Activated T-helper 1 cell treated with anti-CD3 and anti-CD28 coated beads, Interleukin-12 subunit alpha, Interleukin-12 subunit beta, Interleukin-2, Interleukin-4 antibody, amounts not matched to agents 30 ng/mL and 10 ng/mL and 1 ng/mL, durations not matched to agents 14 hours and 24 hours and 36 hours (primary cell): ENCODE measurements at regions of chr10 and their contacts with region 1.

Region 1: GRCh38 chr10:72088889-72089575 is 681 bp upstream of the SPOCK2 start:
- DNase-seq: peak; percentile 47
- H3K4me3 Mint-ChIP-seq: peak overlapping the region; percentile 99
- H3K27ac Mint-ChIP-seq: peak overlapping the region; percentile 99
- H3K4me1 Mint-ChIP-seq: peaks cover 62% of the 10 kb centered on the region
- H3K27me3 Mint-ChIP-seq: no peaks in the 10 kb centered on the region

Region 2: DNA sequence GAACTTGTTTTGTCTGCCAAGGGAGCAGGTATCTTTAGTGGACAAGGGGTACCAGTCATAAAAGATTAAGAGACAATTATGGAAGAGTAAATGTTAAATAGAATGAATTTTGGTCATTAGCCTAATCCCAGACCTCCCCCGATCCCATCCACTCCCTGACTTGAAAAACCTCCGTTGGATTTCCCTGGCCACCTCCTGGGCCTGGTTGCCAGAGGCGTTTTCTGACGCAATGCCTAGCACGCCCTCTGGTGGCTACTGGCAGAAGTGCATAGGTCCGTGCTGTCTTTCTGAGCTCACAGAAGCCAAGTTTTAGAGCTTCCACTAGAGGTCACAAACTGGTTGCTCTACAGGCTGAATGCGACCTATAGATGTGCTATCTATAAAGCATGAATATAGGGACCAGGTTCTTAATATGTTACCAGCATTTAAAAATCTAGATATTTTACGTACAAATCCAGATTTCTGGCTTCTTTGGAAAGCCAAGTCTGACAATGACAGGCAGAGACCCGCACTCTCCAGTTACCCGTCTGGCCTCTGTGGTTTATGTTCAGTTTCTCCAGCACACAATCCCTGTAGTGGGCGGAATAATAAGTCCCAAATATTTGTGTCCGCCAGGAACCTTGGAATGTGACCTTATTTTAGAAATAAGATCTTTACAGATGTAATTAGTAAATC is 40.4 kb before region 1 on chr10:
- intact Hi-C with region 1: loop called (anchors 2 kb)
- DNase-seq: peak; percentile 75
- H3K4me3 Mint-ChIP-seq: no peak overlapping the region
- H3K27ac Mint-ChIP-seq: peak overlapping the region; percentile 0
- H3K4me1 Mint-ChIP-seq: peaks cover 12% of the 10 kb centered on the region
- H3K27me3 Mint-ChIP-seq: peaks cover 3% of the 10 kb centered on the region

Region 3: GRCh38 chr10:72107325-72108003 is 18.4 kb after region 1 on chr10:
- intact Hi-C with region 1: loop called (anchors 1 kb)
- DNase-seq: no peak
- H3K4me3 Mint-ChIP-seq: peak overlapping the region; percentile 79
- H3K27ac Mint-ChIP-seq: peak overlapping the region; percentile 85
- H3K4me1 Mint-ChIP-seq: peaks cover 72% of the 10 kb centered on the region
- H3K27me3 Mint-ChIP-seq: peaks cover 2% of the 10 kb centered on the region

Region 4: GRCh38 chr10:72126184-72126871 is 37.3 kb after region 1 on chr10:
- intact Hi-C with region 1: loop called (anchors 5 kb)
- DNase-seq: no peak
- H3K4me3 Mint-ChIP-seq: no peak overlapping the region
- H3K27ac Mint-ChIP-seq: no peak overlapping the region
- H3K4me1 Mint-ChIP-seq: peaks cover 39% of the 10 kb centered on the region
- H3K27me3 Mint-ChIP-seq: no peaks in the 10 kb centered on the region

Region 5: GRCh38 chr10:72162978-72163377 is 73.9 kb after region 1 on chr10:
- intact Hi-C with region 1: loop called (anchors 2 kb)
- DNase-seq: no peak
- H3K4me3 Mint-ChIP-seq: peak overlapping the region; percentile 57
- H3K27ac Mint-ChIP-seq: peak overlapping the region; percentile 80
- H3K4me1 Mint-ChIP-seq: peaks cover 27% of the 10 kb centered on the region
- H3K27me3 Mint-ChIP-seq: no peaks in the 10 kb centered on the region

Region 6: GRCh38 chr10:73167783-73168464 is 1078.9 kb after region 1 on chr10 and contains the starts of genes ECD and FAM149B1:
- intact Hi-C with region 1: loop called (anchors 10 kb)
- DNase-seq: peak; percentile 91
- H3K4me3 Mint-ChIP-seq: peak within 1 kb of the TSS; percentile 99
- H3K27ac Mint-ChIP-seq: peak within 1 kb of the TSS; percentile 99
- H3K4me1 Mint-ChIP-seq: peaks cover 42% of the 10 kb centered on the region
- H3K27me3 Mint-ChIP-seq: no peaks in the 10 kb centered on the region
- total RNA-seq, gene ECD: 38.0 and 39.5 TPM in 2 replicates
- total RNA-seq, gene FAM149B1: 11.1 and 11.3 TPM in 2 replicates